Ascending aorta (tissue), 2 donors: ENCODE measurements at regions of chr6 and their contacts with region 1.

Region 1: GRCh38 chr6:148578245-148578732 is 168.5 kb upstream of the UST start:
- DNase-seq: peak in 1 of 2 donors; percentile 89
- H3K4me3 ChIP-seq: no peak overlapping the region
- H3K27ac ChIP-seq: no peak overlapping the region
- H3K4me1 ChIP-seq: peaks cover 0 to 6% of the 10 kb centered on the region in 2 donors
- H3K27me3 ChIP-seq: no peaks in the 10 kb centered on the region
- CTCF ChIP-seq: peak; percentile 83 to 95 (median 87)

Region 2: GRCh38 chr6:148271711-148272439 is 306.4 kb before region 1 on chr6:
- intact Hi-C with region 1: no loop called
- DNase-seq: no peak
- H3K4me3 ChIP-seq: peak overlapping the region; percentile 31
- H3K27ac ChIP-seq: peak overlapping the region; percentile 22 to 65
- H3K4me1 ChIP-seq: peaks cover 0 to 15% of the 10 kb centered on the region in 2 donors
- H3K27me3 ChIP-seq: no peaks in the 10 kb centered on the region
- CTCF ChIP-seq: no peak

Region 3: DNA sequence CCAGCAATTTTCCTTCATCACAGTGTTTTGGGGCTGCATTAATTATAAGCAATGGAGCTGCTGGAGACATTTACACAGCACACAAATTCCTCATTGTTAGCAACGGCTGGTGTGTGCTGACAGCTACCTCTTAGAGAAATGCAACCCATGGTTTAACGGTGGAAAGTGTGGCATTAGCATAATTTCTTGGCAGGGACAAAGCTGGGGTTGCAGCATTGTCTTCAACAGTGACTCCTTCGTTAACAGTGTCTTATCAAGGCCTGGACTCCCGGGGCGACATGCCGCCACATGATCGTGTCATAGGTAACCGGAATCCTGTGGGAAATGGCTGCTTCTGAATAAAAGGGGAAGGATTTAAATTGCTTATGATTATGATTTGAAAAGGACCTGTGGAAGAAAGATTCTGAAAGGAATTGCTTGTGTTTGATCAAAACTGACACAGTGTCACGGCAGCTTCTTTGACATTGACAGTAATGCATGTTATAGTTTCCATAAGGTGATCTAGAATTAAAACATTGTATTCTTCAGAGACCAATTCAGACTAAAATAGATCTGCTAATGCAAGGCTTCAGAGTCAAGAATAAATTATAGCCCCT is 296.5 kb after region 1 on chr6:
- intact Hi-C with region 1: loop called (anchors 10 kb)
- DNase-seq: no peak
- H3K4me3 ChIP-seq: no peak overlapping the region
- H3K27ac ChIP-seq: no peak overlapping the region
- H3K4me1 ChIP-seq: peaks cover 0 to 10% of the 10 kb centered on the region in 2 donors
- H3K27me3 ChIP-seq: no peaks in the 10 kb centered on the region
- CTCF ChIP-seq: no peak

Region 4: DNA sequence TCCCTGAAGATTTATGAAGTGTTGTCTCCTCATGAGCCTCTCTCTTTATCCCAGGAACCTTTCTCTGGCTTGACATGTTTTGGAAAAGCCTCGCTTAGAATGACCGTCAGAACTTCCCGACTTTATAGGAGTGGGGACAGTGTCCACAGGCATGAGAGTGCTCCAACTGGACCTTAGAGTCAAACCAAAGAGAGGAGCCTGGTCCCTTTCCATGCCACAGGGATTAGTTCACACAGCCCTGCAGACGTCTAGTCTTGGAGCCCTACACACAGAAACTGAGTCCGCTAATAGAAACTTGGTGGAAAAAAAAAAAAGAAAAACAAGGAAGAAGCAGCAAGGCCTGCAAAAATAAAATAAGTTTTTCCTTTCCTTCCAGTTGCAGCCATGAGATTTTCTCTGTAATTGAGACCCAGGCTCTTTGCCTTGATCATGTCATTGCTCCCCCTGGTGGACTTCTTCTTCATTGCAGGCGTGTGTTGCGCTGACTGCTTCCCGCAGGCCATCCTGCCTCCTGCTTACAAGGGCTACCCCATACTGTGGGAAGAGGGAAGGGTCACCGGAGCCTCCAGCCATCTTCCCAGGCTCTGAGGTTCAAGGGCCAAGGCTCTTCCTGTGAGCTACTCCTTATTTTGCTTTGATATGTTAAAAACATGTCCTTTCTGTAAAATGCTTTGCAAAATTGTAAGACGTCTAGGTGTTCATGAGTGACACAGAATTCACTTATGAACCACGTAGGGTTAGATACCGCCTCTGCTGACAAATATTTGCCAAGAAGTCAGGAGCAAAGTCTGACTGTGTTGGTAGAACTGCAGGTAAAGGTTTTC is 369.5 kb after region 1 on chr6:
- intact Hi-C with region 1: loop called (anchors 1 kb)
- DNase-seq: peak; percentile 33 to 92
- H3K4me3 ChIP-seq: no peak overlapping the region
- H3K27ac ChIP-seq: no peak overlapping the region
- H3K4me1 ChIP-seq: no peaks in the 10 kb centered on the region
- H3K27me3 ChIP-seq: no peaks in the 10 kb centered on the region
- CTCF ChIP-seq: peak; percentile 80 to 88 (median 81)

Region 5: DNA sequence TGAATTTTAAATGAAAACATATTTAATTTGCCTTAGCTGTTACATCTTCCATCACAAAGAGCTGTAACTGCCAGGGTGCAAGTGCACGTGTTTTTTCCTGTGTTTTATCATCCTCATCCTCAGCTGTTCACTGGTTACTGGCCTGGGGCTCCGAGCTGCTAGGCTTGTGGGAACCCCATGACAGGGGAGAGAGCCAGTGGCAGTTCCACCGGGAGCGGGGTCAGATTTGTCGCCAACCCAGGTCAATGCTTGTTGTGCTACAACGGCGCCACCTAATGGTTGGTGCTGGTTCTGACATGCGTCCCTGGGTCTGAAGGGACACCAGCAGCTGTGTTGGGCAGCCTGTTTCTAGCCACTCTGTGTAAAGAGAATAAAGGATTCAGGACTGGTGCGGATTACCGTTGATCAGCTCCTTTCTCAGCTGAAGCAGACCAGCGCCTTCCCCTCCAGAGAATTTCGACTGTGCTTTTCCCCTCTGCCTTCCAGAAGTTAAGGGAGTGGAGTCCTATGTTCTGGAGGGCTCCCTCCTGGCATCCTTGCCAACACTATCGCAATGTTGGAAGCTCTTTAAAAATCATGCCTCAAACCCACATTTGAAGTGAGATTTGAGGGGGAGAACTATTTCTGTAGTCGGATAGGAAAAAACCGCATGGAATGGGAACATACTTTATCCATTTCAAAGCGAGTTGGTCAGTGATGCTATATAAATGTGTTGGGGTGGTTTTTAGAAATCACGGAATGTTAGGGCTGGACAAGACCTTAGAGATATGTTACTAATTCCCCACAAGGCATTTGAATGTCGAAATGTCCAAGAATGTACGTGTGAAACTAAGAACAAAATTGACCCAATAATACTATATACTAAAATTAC is 853.9 kb after region 1 on chr6:
- intact Hi-C with region 1: loop called (anchors 5 kb)
- DNase-seq: peak; percentile 67 to 95
- H3K4me3 ChIP-seq: no peak overlapping the region
- H3K27ac ChIP-seq: no peak overlapping the region
- H3K4me1 ChIP-seq: peaks cover 0 to 4% of the 10 kb centered on the region in 2 donors
- H3K27me3 ChIP-seq: no peaks in the 10 kb centered on the region
- CTCF ChIP-seq: peak; percentile 92 to 96 (median 94)